ENCODE measurements at regions of chr7 and their contacts with region 1.

Region 1: DNA sequence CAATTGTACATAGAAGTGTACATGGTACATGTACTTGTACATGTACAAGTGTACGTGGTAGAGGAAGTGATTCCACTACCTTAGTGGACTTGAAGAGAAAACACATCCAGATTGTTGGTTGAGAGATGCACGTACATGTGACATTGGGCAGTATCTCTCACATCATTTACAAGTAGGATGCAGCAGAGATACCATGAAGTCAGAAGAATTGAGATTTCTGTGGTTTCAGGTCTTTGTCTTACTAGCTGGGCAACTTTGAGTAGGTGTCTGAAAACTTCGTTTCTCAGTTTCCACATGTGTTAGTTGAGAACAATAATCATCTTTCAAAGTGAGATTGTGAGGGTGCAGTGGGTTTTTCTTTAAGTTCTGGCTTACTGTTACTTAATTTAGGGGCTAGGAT is 21.5 kb downstream of the CLDN12 start:
- DNase-seq: no peak
- ATAC-seq: no peak
- H3K4me3 ChIP-seq: no peak overlapping the region
- H3K27ac ChIP-seq: no peak overlapping the region
- H3K4me1 ChIP-seq: no peaks in the 10 kb centered on the region
- H3K27me3 ChIP-seq: no peaks in the 10 kb centered on the region

Region 2: DNA sequence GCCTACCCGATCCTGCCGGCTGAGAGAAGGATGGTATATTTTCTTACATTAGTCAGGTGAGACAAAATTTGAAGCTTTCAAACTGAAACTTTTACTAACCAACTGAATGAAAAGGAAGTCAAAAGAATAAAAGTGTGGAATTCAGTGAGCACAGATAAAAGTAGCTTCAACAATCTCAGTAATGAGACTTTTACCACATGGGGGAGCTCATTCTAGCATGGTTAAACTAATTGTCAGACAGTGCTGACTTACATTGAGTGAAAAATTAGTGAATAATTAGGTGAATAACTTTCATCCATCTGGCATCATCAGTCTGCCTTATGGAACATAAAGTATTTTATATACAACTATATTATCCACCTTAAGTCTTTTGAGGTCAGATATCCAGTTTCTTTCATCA is 112.0 kb before region 1 on chr7:
- intact Hi-C with region 1: loop called in 1 of 2 experiments (anchors 5 kb)
- DNase-seq: no peak
- ATAC-seq: no peak
- H3K4me3 ChIP-seq: no peak overlapping the region
- H3K27ac ChIP-seq: no peak overlapping the region
- H3K4me1 ChIP-seq: no peaks in the 10 kb centered on the region
- H3K27me3 ChIP-seq: no peaks in the 10 kb centered on the region